CD8-positive, alpha-beta T cell (primary cell): ENCODE measurements at regions of chr11 and their contacts with region 1.

Region 1: GRCh38 chr11:73376160-73376802 is at the start of gene RELT:
- DNase-seq: peak; percentile 88 to 96 (median 92)
- ATAC-seq: peak; percentile 95
- H3K4me3 ChIP-seq: peak within 1 kb of the TSS; percentile 74 to 86
- H3K4me3 Mint-ChIP-seq: peak within 1 kb of the TSS; percentile 96
- H3K27ac ChIP-seq: peak within 1 kb of the TSS; percentile 82 to 83
- H3K27ac Mint-ChIP-seq: peak within 1 kb of the TSS; percentile 96
- H3K4me1 ChIP-seq: peaks cover 23% of the 10 kb centered on the region
- H3K4me1 Mint-ChIP-seq: peaks cover 43% of the 10 kb centered on the region
- H3K27me3 ChIP-seq: no peaks in the 10 kb centered on the region
- H3K27me3 Mint-ChIP-seq: no peaks in the 10 kb centered on the region
- CTCF ChIP-seq: peak; percentile 95
- total RNA-seq, gene RELT: 144 to 158 TPM

Region 2: DNA sequence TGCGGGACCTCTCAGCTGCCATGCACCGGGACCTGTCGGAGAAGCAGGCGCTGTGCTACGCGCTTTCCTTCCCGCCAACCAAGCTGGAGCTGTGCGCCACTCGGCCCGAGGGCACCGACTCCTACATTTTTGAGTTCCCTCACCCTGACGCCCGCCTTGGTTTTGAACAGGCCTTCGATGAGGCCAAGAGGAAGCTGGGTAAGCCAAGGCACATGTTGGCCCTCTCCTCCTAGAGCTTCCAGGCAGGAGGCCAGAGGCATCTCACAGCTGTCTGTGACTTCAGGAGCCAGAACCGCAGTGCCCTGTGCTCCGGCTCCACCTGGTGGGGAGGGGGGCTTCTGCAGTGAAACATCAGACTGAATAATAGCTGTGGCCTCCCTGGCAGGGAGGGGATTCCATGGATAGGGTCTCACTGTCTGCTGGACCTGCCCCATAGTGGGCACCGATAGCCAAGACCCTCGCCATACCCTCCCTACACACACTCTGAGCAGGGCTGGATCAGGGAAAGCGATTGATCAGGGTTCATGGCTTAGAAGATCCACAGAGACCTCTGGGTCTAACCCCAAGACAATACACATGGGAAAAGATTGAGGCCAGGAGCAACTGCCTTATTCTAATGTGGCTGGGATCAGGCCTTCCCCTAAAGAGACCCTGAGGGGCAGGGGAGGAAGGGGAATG is 15.8 kb before region 1 on chr11:
- CTCF ChIA-PET with region 1: interaction called, 8 read pairs
- POLR2A ChIA-PET with region 1: interaction called, 4 read pairs
- intact Hi-C with region 1: loop called in 1 of 2 experiments (anchors 2 kb)
- DNase-seq: peak in 6 of 9 experiments; percentile 10 to 46 (median 38)
- ATAC-seq: peak; percentile 73
- H3K4me3 ChIP-seq: no peak overlapping the region
- H3K4me3 Mint-ChIP-seq: no peak overlapping the region
- H3K27ac ChIP-seq: no peak overlapping the region
- H3K27ac Mint-ChIP-seq: no peak overlapping the region
- H3K4me1 ChIP-seq: peaks cover 2% of the 10 kb centered on the region
- H3K4me1 Mint-ChIP-seq: peaks cover 9% of the 10 kb centered on the region
- H3K27me3 ChIP-seq: no peaks in the 10 kb centered on the region
- H3K27me3 Mint-ChIP-seq: no peaks in the 10 kb centered on the region
- CTCF ChIP-seq: peak; percentile 44

Region 3: DNA sequence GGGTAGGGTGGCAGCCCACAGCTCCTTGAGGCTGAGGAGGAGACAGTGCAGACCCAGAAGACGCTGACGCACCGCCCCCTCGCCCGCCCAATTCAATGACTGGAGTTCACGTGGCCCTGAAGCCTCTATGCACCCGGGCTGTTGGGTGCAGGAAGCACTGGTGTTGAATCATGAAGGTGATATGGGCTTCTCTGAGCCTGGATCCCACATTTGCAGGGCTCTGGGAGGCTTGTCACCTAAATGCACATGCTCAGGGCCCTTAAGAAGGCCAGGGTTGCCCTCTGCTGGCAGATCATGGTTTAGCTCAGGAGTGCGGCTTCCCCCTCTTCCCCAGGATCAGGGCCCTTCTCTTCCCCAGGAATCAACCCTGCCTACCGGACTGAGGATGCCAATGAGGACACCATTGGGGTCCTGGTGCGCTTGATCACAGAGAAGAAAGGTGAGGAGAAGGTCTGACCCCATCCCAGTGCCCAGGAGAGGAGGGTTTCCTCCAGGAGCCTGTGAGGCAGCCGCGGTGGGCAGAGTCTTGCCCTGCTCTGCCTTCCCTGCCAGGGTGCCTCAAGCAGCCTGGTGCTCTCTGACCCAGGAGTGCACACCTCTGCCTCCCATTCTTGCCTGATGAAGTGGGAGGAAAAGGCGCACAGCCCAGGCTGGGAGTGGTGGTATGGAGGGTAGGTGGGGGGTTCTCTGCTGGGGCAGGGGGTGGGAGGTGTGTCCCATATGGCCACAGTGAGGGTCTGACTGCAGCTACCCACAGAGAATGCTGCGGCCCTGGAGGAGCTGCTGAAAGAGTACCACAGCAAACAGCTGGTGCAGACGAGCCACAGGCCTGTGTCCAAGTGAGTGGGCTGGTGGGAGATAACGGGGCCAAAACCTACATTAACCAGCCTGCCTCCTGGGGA is 17.4 kb after region 1 on chr11:
- CTCF ChIA-PET with region 1: interaction called, 10 read pairs
- POLR2A ChIA-PET with region 1: no interaction called
- intact Hi-C with region 1: loop called (anchors 1 to 2 kb)
- DNase-seq: peak; percentile 45 to 81 (median 71)
- ATAC-seq: peak; percentile 79
- H3K4me3 ChIP-seq: no peak overlapping the region
- H3K4me3 Mint-ChIP-seq: no peak overlapping the region
- H3K27ac ChIP-seq: no peak overlapping the region
- H3K27ac Mint-ChIP-seq: no peak overlapping the region
- H3K4me1 ChIP-seq: no peaks in the 10 kb centered on the region
- H3K4me1 Mint-ChIP-seq: peaks cover 3% of the 10 kb centered on the region
- H3K27me3 ChIP-seq: no peaks in the 10 kb centered on the region
- H3K27me3 Mint-ChIP-seq: no peaks in the 10 kb centered on the region
- CTCF ChIP-seq: peak; percentile 62

Region 4: DNA sequence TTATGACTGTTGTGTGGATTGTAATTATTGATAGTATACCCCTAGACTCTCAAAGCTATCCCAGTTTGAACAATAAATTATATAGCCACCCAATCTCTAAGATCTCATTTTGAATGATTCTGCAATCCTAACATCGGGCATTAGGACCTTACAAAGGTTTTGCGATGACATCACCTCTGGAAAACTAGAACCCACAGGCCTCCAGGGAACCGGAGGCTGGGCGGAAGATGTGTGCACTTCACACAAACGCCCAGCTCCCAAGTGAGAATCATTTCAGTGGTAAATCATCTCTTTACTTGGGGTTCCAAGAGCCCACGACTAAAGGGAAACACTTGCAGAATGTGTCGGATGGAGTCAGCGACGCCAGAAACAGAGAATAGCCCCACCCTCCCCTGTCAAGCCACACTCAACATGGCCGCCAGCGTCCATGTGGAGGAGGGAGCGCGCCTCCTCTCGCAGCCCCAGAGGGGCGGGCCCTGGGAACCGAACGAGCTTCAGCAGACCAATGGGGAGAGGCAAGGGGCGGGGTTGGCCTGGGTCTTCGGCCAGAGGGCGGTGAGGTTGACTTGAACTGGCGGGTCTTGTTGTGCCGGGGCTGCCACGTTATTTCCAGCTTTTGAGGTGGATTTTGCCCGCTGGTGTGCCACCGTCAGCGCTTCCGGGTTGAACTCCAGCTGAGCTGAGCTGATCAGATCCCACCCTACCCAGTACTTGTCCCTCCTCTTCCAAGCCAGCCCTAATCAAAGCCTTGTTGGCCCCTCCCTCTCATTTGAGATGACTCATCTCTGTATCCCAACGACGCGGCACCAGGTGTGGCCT is 403.0 kb after region 1 on chr11:
- CTCF ChIA-PET with region 1: no interaction called
- POLR2A ChIA-PET with region 1: no interaction called
- intact Hi-C with region 1: loop called (anchors 2 to 10 kb)
- DNase-seq: peak; percentile 95 to 99 (median 97)
- ATAC-seq: peak; percentile 97
- H3K4me3 ChIP-seq: peak overlapping the region; percentile 52 to 62
- H3K4me3 Mint-ChIP-seq: peak overlapping the region; percentile 97
- H3K27ac ChIP-seq: peak overlapping the region; percentile 83 to 97
- H3K27ac Mint-ChIP-seq: peak overlapping the region; percentile 100
- H3K4me1 ChIP-seq: peaks cover 4% of the 10 kb centered on the region
- H3K4me1 Mint-ChIP-seq: peaks cover 16% of the 10 kb centered on the region
- H3K27me3 ChIP-seq: no peaks in the 10 kb centered on the region
- H3K27me3 Mint-ChIP-seq: no peaks in the 10 kb centered on the region
- CTCF ChIP-seq: no peak